Lower leg skin (tissue), 4 donors: ENCODE measurements at regions of chr4 and their contacts with region 1.

Region 1: GRCh38 chr4:7067452-7068278 is at the start of gene GRPEL1:
- DNase-seq: peak; percentile 91 to 100
- H3K4me3 ChIP-seq: peak within 1 kb of the TSS; percentile 93
- CTCF ChIP-seq: no peak
- POLR2A ChIP-seq: peak in 1 of 2 donors; percentile 88
- total RNA-seq, gene GRPEL1: 20.8 to 24.0 (median 21.6) TPM

Region 2: DNA sequence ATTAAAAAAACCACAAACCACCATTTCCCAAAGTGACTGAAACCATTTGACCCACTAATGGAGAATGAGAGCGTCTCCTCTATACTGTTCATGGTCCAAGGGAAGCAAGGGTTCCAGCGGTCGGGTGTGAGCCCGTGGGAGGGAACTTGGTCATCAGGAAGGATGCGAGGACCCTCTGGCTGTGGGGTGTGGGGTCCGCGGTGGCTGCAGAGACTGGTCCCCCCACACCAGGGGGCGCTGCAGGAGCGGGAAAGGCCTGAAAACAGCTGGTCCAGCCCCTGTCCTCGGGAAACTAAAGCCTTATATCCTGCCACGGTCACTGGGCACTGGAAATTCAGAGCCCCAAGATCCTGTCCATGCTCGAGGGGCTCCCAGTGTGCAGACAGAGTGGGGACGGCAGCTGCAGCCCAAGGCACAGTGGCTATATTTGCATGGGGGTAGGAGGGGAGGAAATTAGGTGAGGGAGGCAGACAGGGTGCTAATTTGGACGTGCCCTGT is 347.4 kb before region 1 on chr4:
- intact Hi-C with region 1: loop called (anchors 10 kb)
- DNase-seq: peak; percentile 73 to 96
- H3K4me3 ChIP-seq: no peak overlapping the region
- CTCF ChIP-seq: peak in 1 of 3 donors; percentile 65
- POLR2A ChIP-seq: no peak

Region 3: GRCh38 chr4:6909073-6909965 is 158.3 kb before region 1 on chr4 and contains the start of gene TBC1D14:
- intact Hi-C with region 1: loop called (anchors 10 kb)
- DNase-seq: peak; percentile 83 to 97
- H3K4me3 ChIP-seq: peak within 1 kb of the TSS; percentile 53
- CTCF ChIP-seq: no peak
- POLR2A ChIP-seq: no peak
- total RNA-seq, gene TBC1D14: 54.7 to 101 (median 73.3) TPM

Region 4: GRCh38 chr4:6974138-6974848 is 93.4 kb before region 1 on chr4:
- intact Hi-C with region 1: loop called (anchors 5 kb)
- DNase-seq: peak; percentile 82 to 95
- H3K4me3 ChIP-seq: no peak overlapping the region
- CTCF ChIP-seq: peak in 1 of 3 donors; percentile 87
- POLR2A ChIP-seq: no peak